ENCODE measurements at regions of chr5 and their contacts with region 1.

Region 1: DNA sequence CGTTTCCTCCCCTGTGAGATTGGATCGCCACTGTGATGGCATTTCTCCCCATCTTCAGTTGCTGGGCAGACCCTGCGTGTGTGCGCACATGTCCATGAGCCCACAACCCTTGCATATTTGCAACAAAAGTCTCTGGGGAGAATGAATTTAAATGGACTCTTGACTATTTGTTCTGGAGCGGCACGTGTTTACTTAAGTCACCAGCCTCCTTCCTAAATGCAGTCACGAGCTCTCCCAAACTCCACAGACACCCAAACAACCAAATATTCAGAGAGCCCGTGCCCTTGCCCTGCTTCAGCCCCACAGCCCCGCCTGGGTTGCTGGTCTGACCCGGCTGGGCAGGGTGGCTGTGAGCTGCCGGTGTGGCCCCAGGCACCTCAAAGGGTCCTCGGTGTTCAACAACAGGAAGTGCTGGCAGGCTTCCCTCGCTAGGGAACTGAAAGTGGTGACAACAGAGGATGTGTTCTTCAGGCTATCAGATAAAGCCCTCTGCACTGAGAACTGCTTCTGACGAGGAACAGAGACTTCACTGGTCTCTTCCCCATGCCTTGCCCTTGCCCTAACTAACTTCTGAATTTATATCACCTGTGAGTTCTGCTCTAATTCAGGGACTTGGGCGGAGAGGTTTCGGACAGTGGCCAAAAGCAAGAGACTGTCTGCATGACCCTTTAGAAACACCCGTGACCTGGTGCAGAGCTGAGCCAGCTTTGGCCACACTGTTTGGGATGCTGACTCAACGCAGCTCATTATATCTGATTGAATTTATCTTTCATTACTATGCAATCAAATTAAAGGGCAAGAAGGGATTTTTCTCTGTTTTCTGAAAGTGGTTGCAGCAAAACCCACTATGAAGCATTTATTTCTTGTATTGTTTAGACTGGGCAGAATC is 19.2 kb upstream of the CD180 start:
- DNase-seq: peak; percentile 39 to 80 (median 70)
- H3K4me3 ChIP-seq: peak overlapping the region; percentile 23
- H3K4me3 Mint-ChIP-seq: peak overlapping the region; percentile 1 to 84 (median 79)
- H3K27ac ChIP-seq: peak overlapping the region; percentile 38
- H3K27ac Mint-ChIP-seq: peak overlapping the region; percentile 88 to 98 (median 97)
- H3K4me1 ChIP-seq: peaks cover 54% of the 10 kb centered on the region
- H3K4me1 Mint-ChIP-seq: peaks cover 52 to 62% (median 60%) of the 10 kb centered on the region in 3 donors
- H3K27me3 ChIP-seq: no peaks in the 10 kb centered on the region
- H3K27me3 Mint-ChIP-seq: peaks cover 0 to 4% of the 10 kb centered on the region in 2 donors

Region 2: DNA sequence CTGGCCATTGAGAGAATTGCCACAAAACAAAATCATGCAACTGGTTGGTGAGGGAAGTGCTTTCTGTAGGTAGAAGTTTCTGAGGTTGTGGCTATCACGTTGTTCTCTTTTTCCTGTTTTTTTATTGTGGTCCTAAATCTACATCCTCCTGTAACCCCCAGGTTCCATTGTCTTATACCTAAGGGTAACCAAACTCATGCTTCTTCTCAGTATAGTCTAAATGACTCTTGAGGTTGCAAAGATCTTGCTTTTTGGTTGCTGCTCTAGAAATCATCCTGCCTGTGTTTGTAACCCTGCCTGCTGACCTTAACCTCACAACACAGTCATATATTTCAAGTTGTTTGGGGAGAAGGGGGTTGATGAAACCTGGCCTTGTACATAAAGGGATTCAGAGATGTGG is 292.4 kb before region 1 on chr5:
- CTCF ChIA-PET with region 1: no interaction called
- POLR2A ChIA-PET with region 1: interaction called, 10 read pairs
- DNase-seq: no peak
- H3K4me3 ChIP-seq: no peak overlapping the region
- H3K4me3 Mint-ChIP-seq: no peak overlapping the region
- H3K27ac ChIP-seq: no peak overlapping the region
- H3K27ac Mint-ChIP-seq: no peak overlapping the region
- H3K4me1 ChIP-seq: no peaks in the 10 kb centered on the region
- H3K4me1 Mint-ChIP-seq: peaks cover 0 to 4% (median 0%) of the 10 kb centered on the region in 3 donors
- H3K27me3 ChIP-seq: no peaks in the 10 kb centered on the region
- H3K27me3 Mint-ChIP-seq: peaks cover 4 to 31% of the 10 kb centered on the region in 2 donors

Region 3: DNA sequence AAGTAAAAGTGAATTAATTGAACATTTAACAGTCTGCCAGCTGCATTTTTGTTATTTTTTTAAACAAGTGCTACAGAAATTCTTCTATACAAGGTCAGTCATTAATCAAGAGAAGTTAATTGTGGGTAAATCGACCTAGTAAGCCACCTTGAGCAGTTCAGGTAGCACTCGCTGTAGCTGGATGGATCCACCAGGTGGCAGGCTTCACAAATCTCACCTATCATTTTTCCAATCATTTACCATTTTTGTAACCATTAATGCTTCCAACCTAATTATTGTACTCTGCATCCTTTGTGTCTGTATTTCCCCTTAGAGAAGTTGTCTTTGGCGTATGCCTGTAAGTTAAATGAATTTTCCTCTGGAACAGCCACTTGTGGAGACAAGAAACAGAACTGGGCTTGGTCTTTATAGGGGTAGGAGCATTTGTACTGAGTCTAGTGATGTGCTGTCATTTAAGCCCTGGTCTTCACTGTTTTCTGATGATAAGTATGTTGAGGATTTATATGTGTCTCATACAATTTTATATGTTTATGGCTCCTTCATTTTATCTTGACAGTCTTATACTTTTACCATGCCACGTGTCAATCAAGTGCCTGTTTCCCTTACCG is 58.7 kb before region 1 on chr5:
- CTCF ChIA-PET with region 1: interaction called, 342 read pairs
- POLR2A ChIA-PET with region 1: no interaction called
- DNase-seq: peak; percentile 30 to 68 (median 44)
- H3K4me3 ChIP-seq: no peak overlapping the region
- H3K4me3 Mint-ChIP-seq: peak overlapping the region in 1 of 7 donors; percentile 28
- H3K27ac ChIP-seq: no peak overlapping the region
- H3K27ac Mint-ChIP-seq: peak overlapping the region; percentile 13 to 63 (median 54)
- H3K4me1 ChIP-seq: peaks cover 47% of the 10 kb centered on the region
- H3K4me1 Mint-ChIP-seq: peaks cover 44 to 59% (median 54%) of the 10 kb centered on the region in 3 donors
- H3K27me3 ChIP-seq: no peaks in the 10 kb centered on the region
- H3K27me3 Mint-ChIP-seq: no peaks in the 10 kb centered on the region

Region 4: DNA sequence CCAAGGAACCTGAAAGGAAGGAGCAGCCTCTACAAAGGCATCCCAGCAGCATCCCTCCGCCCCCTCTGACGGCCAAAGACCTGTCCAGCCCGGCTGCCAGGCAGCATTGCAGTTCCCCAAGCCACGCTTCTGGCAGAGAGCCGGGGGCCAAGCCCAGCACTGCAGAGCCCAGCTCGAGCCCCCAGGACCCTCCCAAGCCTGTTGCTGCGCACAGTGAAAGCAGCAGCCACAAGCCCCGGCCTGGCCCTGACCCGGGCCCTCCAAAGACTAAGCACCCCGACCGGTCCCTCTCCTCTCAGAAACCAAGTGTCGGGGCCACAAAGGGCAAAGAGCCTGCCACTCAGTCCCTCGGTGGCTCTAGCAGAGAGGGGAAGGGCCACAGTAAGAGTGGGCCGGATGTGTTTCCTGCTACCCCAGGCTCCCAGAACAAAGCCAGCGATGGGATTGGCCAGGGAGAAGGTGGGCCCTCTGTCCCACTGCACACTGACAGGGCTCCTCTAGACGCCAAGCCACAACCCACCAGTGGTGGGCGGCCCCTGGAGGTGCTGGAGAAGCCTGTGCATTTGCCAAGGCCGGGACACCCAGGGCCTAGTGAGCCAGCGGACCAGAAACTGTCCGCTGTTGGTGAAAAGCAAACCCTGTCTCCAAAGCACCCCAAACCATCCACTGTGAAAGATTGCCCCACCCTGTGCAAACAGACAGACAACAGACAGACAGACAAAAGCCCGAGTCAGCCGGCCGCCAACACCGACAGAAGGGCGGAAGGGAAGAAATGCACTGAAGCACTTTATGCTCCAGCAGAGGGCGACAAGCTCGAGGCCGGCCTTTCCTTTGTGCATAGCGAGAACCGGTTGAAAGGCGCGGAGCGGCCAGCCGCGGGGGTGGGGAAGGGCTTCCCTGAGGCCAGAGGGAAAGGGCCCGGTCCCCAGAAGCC is 50.0 kb before region 1 on chr5:
- CTCF ChIA-PET with region 1: interaction called, 342 read pairs
- POLR2A ChIA-PET with region 1: interaction called, 13 read pairs
- DNase-seq: peak; percentile 65 to 88 (median 81)
- H3K4me3 ChIP-seq: peak overlapping the region; percentile 68
- H3K4me3 Mint-ChIP-seq: peak overlapping the region; percentile 88 to 97 (median 95)
- H3K27ac ChIP-seq: peak overlapping the region; percentile 69
- H3K27ac Mint-ChIP-seq: peak overlapping the region; percentile 96 to 100 (median 99)
- H3K4me1 ChIP-seq: peaks cover 69% of the 10 kb centered on the region
- H3K4me1 Mint-ChIP-seq: peaks cover 55 to 78% (median 67%) of the 10 kb centered on the region in 3 donors
- H3K27me3 ChIP-seq: no peaks in the 10 kb centered on the region
- H3K27me3 Mint-ChIP-seq: no peaks in the 10 kb centered on the region

Measured in CD8-positive, alpha-beta memory T cell (primary cell).